Heart right ventricle (tissue), 16 donors: ENCODE measurements at regions of chr12 and their contacts with region 1.

Region 1: GRCh38 chr12:107679336-107679735 is 6.3 kb upstream of the PWP1 start:
- DNase-seq: no peak
- ATAC-seq: no peak
- H3K4me3 ChIP-seq: no peak overlapping the region
- H3K27ac ChIP-seq: no peak overlapping the region
- H3K4me1 ChIP-seq: peaks cover 0 to under 1% (median 0%) of the 10 kb centered on the region in 9 donors
- H3K27me3 ChIP-seq: peaks cover 0 to 35% (median 23%) of the 10 kb centered on the region in 7 donors
- CTCF ChIP-seq: no peak

Region 2: DNA sequence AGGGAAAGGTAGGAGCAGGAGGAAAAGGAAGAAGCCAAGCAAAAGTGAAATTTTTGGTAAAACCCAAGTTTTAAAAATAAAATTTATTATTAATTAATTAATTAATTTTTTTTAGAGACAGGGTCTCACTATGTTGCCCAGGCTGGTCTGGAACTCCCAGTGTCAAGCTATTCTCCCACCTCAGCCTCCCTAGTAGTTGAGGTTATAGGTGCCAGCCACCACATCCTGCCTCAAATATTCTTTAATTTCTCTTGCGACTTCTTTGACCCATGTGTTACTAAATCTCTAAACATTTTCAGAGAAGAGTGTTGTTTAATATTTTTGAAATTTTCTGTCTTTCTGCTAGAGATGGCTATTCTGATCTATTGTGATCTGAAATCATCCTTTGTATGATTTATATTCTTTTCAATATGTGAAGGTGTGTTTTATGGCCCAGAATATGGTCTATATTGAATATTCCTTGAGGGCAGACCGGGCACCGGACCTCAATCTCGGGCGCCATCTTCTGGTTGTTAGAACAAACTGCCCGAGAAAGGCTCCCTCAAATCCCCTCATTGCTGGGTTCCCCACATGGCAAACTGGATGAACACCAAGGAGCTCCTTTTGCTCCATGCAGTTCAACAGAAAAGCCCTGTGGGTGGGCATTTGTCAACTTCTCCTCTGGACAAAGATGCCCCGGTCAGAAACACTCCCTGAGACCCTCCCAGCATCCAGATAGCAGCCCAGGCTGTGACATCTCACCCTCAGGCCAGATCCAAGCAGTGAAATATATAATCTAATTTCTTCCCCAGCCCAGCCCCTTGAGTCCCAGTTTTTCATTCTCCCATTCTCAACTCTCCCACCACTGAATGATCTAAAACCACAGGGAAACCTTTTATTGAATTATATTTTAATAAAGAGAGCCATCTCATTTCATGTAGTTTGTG is 205.7 kb after region 1 on chr12:
- intact Hi-C with region 1: loop called in 9 of 10 experiments (anchors 5 to 10 kb)
- DNase-seq: peak; percentile 23 to 38
- ATAC-seq: peak in 3 of 8 donors; percentile 17 to 58 (median 34)
- H3K4me3 ChIP-seq: no peak overlapping the region
- H3K27ac ChIP-seq: no peak overlapping the region
- H3K4me1 ChIP-seq: no peaks in the 10 kb centered on the region
- H3K27me3 ChIP-seq: peaks cover 0 to 58% (median 25%) of the 10 kb centered on the region in 7 donors
- CTCF ChIP-seq: peak; percentile 18 to 76 (median 71)

Region 3: GRCh38 chr12:108507971-108508642 is 828.8 kb after region 1 on chr12:
- intact Hi-C with region 1: loop called in 1 of 10 experiments (anchors 5 kb)
- DNase-seq: no peak
- ATAC-seq: no peak
- H3K4me3 ChIP-seq: no peak overlapping the region
- H3K27ac ChIP-seq: no peak overlapping the region
- H3K4me1 ChIP-seq: peaks cover 0 to 9% (median 5%) of the 10 kb centered on the region in 9 donors
- H3K27me3 ChIP-seq: peaks cover 0 to 15% (median 6%) of the 10 kb centered on the region in 7 donors
- CTCF ChIP-seq: no peak